Posterior vena cava (tissue), 2 donors: ENCODE measurements at regions of chr9 and their contacts with region 1.

Region 1: DNA sequence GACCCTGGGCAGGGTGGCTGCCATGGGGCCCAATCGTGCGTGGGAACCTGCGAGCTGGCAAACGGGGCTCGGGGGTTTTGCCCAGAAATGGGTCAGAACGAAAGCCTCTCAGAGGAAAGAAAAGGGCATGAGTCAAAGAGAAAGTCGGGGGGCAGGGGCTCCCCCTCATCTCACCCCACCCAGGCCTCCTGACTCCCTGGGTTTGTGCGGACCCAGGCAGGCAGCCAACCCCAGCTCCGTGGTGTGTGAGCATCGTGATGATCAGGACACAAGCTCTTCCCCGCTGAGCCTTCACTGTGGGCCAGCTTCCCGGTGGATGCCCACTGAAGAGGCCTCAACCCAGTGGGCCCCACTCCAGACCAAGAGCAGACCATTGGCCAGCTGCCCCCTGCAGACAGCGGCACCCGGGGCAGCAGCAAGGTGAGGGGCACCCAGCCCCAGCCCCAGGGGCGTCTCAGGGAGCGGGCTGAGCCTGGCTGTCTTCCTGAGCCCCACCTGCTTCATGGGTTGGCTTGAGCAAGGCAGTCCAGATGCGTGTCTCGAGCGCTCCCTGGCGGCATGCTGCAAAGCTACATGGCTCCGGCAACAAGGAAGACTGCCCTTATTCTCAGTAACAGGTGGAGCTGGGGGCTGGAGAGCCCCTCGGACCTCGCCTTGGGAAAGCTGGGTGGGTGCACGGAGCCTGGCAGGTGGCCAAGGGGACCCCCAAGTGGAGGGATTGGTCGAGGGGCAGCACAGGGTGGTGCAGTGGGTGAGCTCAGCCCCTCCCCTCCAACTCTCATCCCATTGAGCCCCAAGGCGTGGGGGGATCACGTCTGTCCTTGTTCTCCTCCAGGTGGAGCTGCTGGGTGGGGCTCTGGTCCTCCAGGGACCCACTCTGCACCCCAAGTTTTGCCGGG is 3.2 kb upstream of the FUT7 start:
- DNase-seq: peak; percentile 93

Region 2: GRCh38 chr9:136784249-136784996 is 250.7 kb before region 1 on chr9:
- intact Hi-C with region 1: loop called in 1 of 2 experiments (anchors 2 kb)
- DNase-seq: no peak

Region 3: GRCh38 chr9:136849038-136849959 is 185.8 kb before region 1 on chr9 and contains the start of gene PHPT1:
- intact Hi-C with region 1: loop called in 1 of 2 experiments (anchors 10 kb)
- DNase-seq: peak; percentile 100
- total RNA-seq, gene PHPT1: 71.7 to 87.9 TPM

Region 4: GRCh38 chr9:137000177-137000883 is 34.8 kb before region 1 on chr9:
- intact Hi-C with region 1: no loop called
- DNase-seq: no peak

Region 5: DNA sequence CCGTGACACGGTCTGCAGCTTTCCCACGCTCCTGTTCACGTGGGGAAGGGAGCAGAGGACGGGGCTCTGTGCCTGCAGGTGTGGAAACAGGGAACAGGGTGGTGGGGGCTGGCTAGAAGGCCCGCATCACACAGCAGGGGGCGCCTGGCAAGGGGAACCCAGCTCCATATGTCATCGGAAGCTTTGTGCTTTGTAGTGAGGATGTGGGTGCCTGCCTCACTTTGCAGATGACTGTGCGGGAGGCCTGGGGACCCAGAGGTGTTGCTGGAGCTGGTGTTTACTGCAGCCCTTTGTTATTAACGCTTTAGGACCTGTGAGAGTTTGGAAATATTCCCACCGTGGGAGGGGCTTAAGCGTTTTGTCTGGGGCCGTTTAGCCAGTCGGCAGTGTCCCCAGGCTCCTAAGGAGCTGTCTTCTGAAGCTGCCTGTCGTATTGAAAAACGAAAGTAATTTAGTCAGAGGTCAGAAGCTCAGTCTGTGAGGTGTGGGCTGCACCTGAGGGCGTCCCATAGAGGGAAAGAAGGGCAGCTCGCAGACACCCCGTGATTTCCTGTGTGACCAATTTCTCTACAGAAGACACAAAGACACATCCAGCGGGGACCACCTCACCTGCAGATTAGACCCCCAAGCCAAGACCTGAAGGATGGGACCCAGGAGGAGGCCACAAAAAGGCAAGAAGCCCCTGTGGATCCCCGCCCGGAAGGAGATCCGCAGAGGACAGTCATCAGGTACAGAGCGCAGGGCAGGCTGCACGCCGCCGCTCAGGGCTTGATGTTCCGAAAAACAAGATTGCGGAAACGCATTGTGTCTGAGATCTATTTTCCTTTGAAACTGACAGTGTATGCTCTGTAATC is 60.8 kb after region 1 on chr9:
- intact Hi-C with region 1: no loop called
- DNase-seq: no peak